ENCODE measurements at regions of chr3 and their contacts with region 1.

Region 1: DNA sequence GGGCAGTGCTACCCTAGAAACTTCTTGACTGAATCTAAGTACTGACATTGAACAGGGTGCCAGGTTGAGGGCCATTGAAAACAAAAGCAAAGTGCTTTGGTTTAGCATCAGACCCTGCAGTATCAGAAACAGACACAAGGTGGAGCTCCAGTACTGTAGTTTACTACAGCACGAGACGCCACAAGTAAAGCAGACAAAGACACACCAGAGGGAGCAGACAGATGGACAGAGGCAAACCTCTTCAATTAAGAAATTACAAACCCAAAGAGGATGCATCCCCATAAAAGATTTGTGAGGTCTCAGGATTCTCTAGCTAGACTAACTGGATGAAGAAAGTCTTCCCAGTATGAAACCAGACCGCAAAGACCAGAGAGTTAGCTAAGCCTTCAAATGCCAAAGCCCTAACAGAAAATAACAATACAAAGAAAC is 16.6 kb downstream of the TOP2B start:
- DNase-seq: peak; percentile 85
- H3K4me3 Mint-ChIP-seq: no peak overlapping the region
- H3K27ac Mint-ChIP-seq: no peak overlapping the region
- H3K4me1 Mint-ChIP-seq: peaks cover 15% of the 10 kb centered on the region
- H3K27me3 Mint-ChIP-seq: no peaks in the 10 kb centered on the region
- CTCF ChIP-seq: peak; percentile 86

Region 2: DNA sequence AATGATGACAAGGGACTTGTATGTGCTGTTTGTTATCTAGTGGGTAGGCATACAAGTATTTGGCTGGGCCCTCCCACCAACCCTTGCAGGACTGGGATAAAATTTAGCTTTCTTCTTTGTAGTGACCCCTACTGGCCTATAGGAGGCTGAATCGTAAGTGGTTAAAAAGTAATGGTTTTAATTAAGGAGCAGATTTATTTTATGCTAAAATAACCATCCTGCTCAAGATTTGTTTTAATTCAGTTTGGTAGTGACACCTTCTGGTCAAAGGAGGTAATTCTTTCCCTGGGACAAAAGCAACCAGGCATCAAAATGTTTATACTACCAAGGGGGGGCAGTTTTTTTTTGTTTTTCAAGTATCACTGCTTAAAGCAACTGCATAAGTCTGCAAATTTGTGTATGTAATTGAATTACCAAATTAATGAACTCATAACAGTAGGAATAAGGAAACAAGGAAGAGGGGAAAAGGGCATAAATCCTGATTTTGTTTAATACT is 54.1 kb before region 1 on chr3:
- CTCF ChIA-PET with region 1: no interaction called
- POLR2A ChIA-PET with region 1: no interaction called
- intact Hi-C with region 1: no loop called
- DNase-seq: peak; percentile 64
- H3K4me3 Mint-ChIP-seq: no peak overlapping the region
- H3K27ac Mint-ChIP-seq: no peak overlapping the region
- H3K4me1 Mint-ChIP-seq: peaks cover 5% of the 10 kb centered on the region
- H3K27me3 Mint-ChIP-seq: no peaks in the 10 kb centered on the region
- CTCF ChIP-seq: peak; percentile 60

Region 3: DNA sequence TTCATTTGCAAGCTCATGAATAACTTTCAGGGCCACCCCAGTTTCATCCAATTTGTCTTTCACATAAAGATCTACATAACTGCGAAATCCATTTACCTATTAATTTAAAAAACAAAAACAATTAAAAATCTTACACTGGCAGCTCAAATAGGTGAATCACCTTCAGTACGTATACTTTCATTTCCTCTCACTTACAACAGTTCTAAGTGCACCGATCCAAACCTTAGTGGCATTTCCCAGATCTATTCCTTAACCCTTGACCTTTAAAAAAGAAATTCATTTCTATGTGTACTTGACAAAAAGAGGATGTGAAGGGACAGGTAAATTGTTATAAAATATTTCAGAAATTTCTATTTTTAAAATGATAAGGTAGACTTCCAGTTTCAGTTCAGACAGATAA is 14.2 kb before region 1 on chr3:
- CTCF ChIA-PET with region 1: interaction called, 45 read pairs
- POLR2A ChIA-PET with region 1: no interaction called
- intact Hi-C with region 1: no loop called
- DNase-seq: no peak
- H3K4me3 Mint-ChIP-seq: no peak overlapping the region
- H3K27ac Mint-ChIP-seq: no peak overlapping the region
- H3K4me1 Mint-ChIP-seq: peaks cover 3% of the 10 kb centered on the region
- H3K27me3 Mint-ChIP-seq: no peaks in the 10 kb centered on the region
- CTCF ChIP-seq: no peak

Region 4: DNA sequence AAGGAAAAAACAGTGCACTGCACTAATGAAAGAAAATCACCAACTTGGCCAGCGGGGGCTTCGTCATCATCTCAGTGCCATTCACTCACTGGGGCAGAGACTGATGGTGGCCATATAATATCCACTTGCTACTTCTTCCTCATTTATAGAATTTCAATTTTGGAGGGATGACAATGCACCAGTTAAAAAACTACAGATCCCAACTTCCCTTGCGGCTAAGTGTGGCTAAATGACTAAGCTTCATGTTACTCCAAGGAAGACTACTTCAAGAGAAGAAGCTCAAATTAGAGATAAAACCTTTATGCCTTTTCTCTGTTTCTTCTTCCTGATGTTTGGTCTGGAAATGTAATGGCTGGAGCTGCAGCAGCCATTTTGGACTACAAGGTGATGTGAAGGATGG is 96.3 kb after region 1 on chr3:
- CTCF ChIA-PET with region 1: interaction called, 21 read pairs
- POLR2A ChIA-PET with region 1: no interaction called
- intact Hi-C with region 1: no loop called
- DNase-seq: no peak
- H3K4me3 Mint-ChIP-seq: no peak overlapping the region
- H3K27ac Mint-ChIP-seq: no peak overlapping the region
- H3K4me1 Mint-ChIP-seq: no peaks in the 10 kb centered on the region
- H3K27me3 Mint-ChIP-seq: no peaks in the 10 kb centered on the region
- CTCF ChIP-seq: no peak

Region 5: GRCh38 chr3:25826510-25826909 is 178.4 kb after region 1 on chr3:
- CTCF ChIA-PET with region 1: interaction called, 17 read pairs
- POLR2A ChIA-PET with region 1: no interaction called
- intact Hi-C with region 1: loop called (anchors 1 kb)
- DNase-seq: no peak
- H3K4me3 Mint-ChIP-seq: no peak overlapping the region
- H3K27ac Mint-ChIP-seq: no peak overlapping the region
- H3K4me1 Mint-ChIP-seq: no peaks in the 10 kb centered on the region
- H3K27me3 Mint-ChIP-seq: no peaks in the 10 kb centered on the region
- CTCF ChIP-seq: no peak

Region 6: GRCh38 chr3:25962249-25962648 is 314.1 kb after region 1 on chr3:
- CTCF ChIA-PET with region 1: interaction called, 19 read pairs
- POLR2A ChIA-PET with region 1: interaction called, 4 read pairs
- intact Hi-C with region 1: loop called (anchors 1 kb)
- DNase-seq: peak; percentile 45
- H3K4me3 Mint-ChIP-seq: no peak overlapping the region
- H3K27ac Mint-ChIP-seq: no peak overlapping the region
- H3K4me1 Mint-ChIP-seq: no peaks in the 10 kb centered on the region
- H3K27me3 Mint-ChIP-seq: no peaks in the 10 kb centered on the region
- CTCF ChIP-seq: peak; percentile 48

Region 7: GRCh38 chr3:26712211-26713026 is 1064.3 kb after region 1 on chr3:
- CTCF ChIA-PET with region 1: interaction called, 16 read pairs
- POLR2A ChIA-PET with region 1: interaction called, 3 read pairs
- intact Hi-C with region 1: loop called (anchors 1 kb)
- DNase-seq: peak; percentile 50
- H3K4me3 Mint-ChIP-seq: no peak overlapping the region
- H3K27ac Mint-ChIP-seq: no peak overlapping the region
- H3K4me1 Mint-ChIP-seq: no peaks in the 10 kb centered on the region
- H3K27me3 Mint-ChIP-seq: no peaks in the 10 kb centered on the region
- CTCF ChIP-seq: peak; percentile 56

Measured in MCF 10A (cell line).